Gastrocnemius medialis (tissue), 4 donors: ENCODE measurements at regions of chr6 and their contacts with region 1.

Region 1: DNA sequence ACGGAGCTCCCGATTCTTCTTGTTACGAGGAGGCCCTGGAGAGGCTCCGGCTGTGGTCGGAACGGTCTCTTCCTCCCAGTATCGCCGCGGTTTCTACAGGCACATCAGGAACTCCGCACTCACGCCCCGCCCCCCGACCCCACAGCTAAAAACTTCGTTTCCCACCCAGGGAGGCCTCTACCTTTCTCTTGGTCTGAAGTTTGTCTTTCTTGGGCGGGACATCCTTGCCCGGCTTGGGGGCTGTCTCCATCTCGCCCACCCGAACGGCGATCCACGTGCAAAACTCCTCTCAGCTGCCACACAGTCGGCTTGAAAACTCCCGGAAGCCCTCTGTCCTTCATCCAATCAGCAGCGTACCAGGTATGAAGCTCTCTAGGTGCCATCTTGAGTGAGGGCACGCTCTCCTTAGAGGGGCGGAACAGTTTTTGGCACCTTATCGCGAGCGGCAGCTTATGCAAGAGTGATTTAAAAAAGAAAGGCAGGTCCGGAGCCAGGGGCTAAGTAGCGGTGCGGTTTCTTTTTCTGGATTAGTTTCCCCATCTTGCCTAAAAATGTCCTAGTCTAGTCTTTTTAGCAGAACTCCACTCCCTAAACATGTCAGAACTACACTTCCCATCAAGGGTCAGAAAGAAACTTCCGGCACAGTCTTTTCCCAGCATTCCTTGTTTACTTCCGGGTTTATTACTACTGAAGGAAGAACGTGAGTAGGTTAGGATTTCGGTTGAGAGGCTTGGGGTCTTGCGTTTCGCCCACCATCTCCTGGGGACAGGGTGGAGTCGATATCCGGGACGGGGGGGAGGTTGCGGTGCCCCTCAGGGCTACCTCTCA is at the starts of genes PFDN6 and WDR46:
- DNase-seq: peak; percentile 77 to 83
- ATAC-seq: peak; percentile 98 to 99
- H3K4me3 ChIP-seq: peak within 1 kb of the TSS; percentile 62 to 89 (median 66)
- H3K27ac ChIP-seq: peak within 1 kb of the TSS; percentile 84 to 92 (median 86)
- H3K4me1 ChIP-seq: peaks cover 18% of the 10 kb centered on the region in 2 donors
- H3K27me3 ChIP-seq: no peaks in the 10 kb centered on the region
- CTCF ChIP-seq: no peak
- POLR2A ChIP-seq: peak; percentile 41 to 64
- total RNA-seq, gene PFDN6: 49.9 to 106 (median 76.8) TPM
- total RNA-seq, gene WDR46: 34.5 to 57.3 (median 49.1) TPM

Region 2: DNA sequence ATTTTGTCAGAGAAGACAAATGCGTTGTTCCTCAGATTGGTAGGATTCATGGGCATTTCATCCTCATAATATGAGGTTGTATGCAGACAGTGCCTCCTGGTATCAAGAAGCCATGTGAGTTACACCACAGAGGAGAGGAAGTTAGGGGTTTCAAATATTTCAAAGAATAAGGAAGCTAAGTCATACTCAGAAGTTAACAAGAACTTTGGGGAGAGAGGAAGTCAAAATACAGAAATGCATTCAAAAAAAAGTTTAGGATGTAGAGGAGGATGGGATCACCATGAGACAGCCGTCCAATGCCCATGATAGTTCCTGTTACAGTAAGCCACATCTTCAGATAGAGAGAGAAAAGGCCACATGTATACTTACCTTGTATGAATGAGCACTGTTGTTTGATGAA is 494.6 kb before region 1 on chr6:
- in situ Hi-C with region 1: no loop called
- intact Hi-C with region 1: no loop called
- DNase-seq: no peak
- ATAC-seq: no peak
- H3K4me3 ChIP-seq: no peak overlapping the region
- H3K27ac ChIP-seq: no peak overlapping the region
- H3K4me1 ChIP-seq: no peaks in the 10 kb centered on the region
- H3K27me3 ChIP-seq: peaks cover 0 to 9% (median 6%) of the 10 kb centered on the region in 3 donors
- CTCF ChIP-seq: no peak
- POLR2A ChIP-seq: no peak

Region 3: DNA sequence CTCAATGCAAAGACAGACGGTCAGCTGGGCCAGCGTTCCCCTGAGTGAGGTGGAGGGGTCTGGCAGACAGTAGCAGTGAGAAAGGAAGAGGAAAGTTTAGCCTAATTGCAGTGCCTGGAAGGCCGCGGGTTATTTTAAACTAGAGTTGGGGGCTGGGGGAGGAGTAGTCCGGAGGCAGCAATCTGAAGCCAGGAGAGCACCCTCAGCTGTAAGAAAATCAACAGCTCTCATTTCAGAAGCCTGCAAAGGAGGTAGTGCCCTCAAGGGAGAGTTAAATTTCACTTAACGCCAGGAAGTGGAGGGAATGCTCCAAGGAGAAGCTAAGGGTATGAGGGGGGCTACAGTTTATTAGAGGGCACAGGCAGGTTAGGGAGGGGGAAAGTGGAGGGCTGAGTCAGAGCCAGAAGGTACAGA is 53.9 kb before region 1 on chr6:
- in situ Hi-C with region 1: no loop called
- intact Hi-C with region 1: no loop called
- DNase-seq: no peak
- ATAC-seq: no peak
- H3K4me3 ChIP-seq: no peak overlapping the region
- H3K27ac ChIP-seq: no peak overlapping the region
- H3K4me1 ChIP-seq: no peaks in the 10 kb centered on the region
- H3K27me3 ChIP-seq: peaks cover 0 to 5% (median 5%) of the 10 kb centered on the region in 3 donors
- CTCF ChIP-seq: no peak
- POLR2A ChIP-seq: no peak

Region 4: DNA sequence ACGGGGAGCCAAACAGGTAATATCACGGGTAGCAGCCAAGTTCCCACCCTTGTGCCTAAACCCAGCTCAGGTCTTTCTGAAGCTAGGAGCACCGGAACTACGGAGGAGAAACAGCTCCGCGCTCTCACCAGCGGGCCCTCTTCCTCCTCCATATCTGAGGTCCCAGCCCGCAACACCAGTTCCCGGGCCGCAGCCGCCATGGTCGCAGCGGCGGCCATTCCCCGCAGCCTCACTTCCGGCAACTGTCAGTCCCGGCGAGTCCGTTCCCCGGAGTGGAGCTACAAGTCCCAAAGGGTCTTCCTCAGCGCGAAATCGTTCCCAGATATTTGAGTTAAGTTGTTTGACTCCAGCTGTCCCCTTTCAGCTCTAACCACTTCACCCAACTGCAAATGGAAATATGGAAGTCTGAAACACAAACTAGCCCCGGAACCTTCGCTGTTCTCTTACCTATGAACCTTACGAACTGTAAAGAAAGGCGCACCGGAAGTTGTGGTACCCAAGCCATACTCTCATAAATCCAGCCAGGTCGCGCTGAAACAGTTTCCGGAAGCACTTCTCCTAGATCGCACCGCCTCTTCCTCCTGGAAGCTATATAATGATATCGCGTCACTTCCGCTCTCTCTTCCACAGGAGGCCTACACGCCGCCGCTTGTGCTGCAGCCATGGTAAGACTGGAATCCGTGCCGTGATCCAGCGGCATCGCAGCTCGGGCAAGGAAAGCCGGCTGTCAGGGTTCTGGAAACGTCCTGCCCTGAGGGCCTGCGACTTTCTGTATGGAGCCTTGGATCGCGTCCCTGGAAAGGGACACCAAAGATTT is 17.5 kb before region 1 on chr6 and contains the starts of genes RPS18 and VPS52:
- in situ Hi-C with region 1: no loop called
- intact Hi-C with region 1: loop called (anchors 1 kb)
- DNase-seq: peak; percentile 95 to 96
- ATAC-seq: peak; percentile 98 to 99
- H3K4me3 ChIP-seq: peak within 1 kb of the TSS; percentile 67 to 95 (median 80)
- H3K27ac ChIP-seq: peak within 1 kb of the TSS; percentile 85 to 96 (median 90)
- H3K4me1 ChIP-seq: peaks cover 46 to 53% of the 10 kb centered on the region in 2 donors
- H3K27me3 ChIP-seq: no peaks in the 10 kb centered on the region
- CTCF ChIP-seq: no peak
- POLR2A ChIP-seq: peak; percentile 92 to 95
- total RNA-seq, gene RPS18: 1,834 to 2,142 (median 2,010) TPM
- total RNA-seq, gene VPS52: 28.7 to 52.8 (median 41.2) TPM

Region 5: GRCh38 chr6:33299237-33299944 is 10.3 kb after region 1 on chr6:
- in situ Hi-C with region 1: no loop called
- intact Hi-C with region 1: loop called (anchors 1 kb)
- DNase-seq: peak; percentile 84 to 89
- ATAC-seq: peak; percentile 90 to 93
- H3K4me3 ChIP-seq: peak overlapping the region; percentile 71 to 86 (median 80)
- H3K27ac ChIP-seq: peak overlapping the region; percentile 96 to 99 (median 97)
- H3K4me1 ChIP-seq: peaks cover 11 to 23% of the 10 kb centered on the region in 2 donors
- H3K27me3 ChIP-seq: no peaks in the 10 kb centered on the region
- CTCF ChIP-seq: peak; percentile 55 to 85 (median 80)
- POLR2A ChIP-seq: peak; percentile 78 to 86

Region 6: DNA sequence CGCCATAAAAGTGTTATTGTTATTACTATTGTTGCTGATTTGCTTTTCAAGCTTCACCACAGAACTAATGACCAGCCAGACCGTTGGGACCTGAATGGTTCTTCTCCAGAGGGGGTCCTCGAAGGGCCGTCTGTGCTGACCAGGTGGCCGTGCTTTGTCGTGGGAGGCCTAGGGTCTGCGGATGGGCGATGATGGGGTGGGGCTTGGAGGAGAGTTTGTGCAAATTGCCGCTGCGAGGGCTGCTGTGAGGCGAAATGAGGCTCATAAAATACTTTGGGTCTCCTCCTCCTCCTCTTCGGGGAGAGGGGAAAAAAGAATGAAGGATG is 34.5 kb after region 1 on chr6:
- in situ Hi-C with region 1: no loop called
- intact Hi-C with region 1: loop called (anchors 1 kb)
- DNase-seq: no peak
- ATAC-seq: peak in 1 of 2 donors; percentile 1
- H3K4me3 ChIP-seq: peak overlapping the region; percentile 61 to 88 (median 78)
- H3K27ac ChIP-seq: peak overlapping the region; percentile 84 to 95 (median 90)
- H3K4me1 ChIP-seq: peaks cover 30 to 39% of the 10 kb centered on the region in 2 donors
- H3K27me3 ChIP-seq: no peaks in the 10 kb centered on the region
- CTCF ChIP-seq: no peak
- POLR2A ChIP-seq: no peak

Region 7: GRCh38 chr6:33410050-33410710 is 121.0 kb after region 1 on chr6:
- in situ Hi-C with region 1: no loop called
- intact Hi-C with region 1: loop called (anchors 1 kb)
- DNase-seq: peak; percentile 96 to 97
- ATAC-seq: peak; percentile 87 to 88
- H3K4me3 ChIP-seq: peak overlapping the region; percentile 70 to 100 (median 98)
- H3K27ac ChIP-seq: peak overlapping the region; percentile 99 to 100 (median 99)
- H3K4me1 ChIP-seq: peaks cover 9 to 18% of the 10 kb centered on the region in 2 donors
- H3K27me3 ChIP-seq: no peaks in the 10 kb centered on the region
- CTCF ChIP-seq: no peak
- POLR2A ChIP-seq: peak; percentile 54 to 73

Region 8: DNA sequence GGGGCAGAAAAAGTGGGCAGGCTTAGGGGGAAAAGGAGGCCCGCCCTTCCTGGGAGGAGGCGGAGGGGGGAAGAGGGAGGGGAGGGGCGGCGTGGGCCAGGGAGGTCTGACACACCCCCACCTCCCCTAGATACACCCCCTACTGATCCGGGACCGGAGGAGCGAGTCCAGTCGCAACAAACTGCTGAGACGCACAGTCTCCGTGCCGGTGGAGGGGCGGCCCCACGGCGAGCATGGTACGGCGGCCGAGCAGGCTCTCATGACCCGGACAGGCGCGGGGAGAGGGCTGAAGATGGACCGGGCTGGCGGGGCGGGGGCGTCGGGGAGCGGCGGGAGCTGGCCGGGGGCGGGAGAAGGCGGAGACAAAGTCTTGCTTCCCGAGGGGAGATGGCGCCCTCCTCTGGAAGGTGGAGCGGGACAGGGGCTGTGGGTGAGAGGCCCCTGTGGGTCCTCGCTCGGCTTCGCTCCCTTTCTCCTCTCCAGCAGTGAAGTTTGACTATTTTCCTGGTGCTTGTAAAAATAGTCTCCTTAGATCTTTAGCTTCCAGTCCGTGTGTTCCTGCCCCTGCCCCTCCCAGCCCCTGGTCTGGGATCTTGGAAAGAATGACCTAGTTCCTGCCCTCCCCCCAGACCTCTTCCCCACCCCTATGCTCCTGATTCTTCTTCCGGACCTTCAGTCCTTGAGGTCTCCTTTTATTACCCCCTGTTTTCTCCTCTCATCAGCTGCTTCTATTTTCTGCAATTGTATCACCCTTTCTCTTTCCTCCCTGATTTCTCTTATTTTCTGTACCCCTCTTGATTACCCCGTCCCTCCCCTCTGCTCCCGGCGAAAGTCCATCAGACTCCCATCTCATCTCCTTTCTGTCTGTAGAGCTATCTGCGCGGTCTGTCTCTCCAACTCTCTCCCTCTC is 136.8 kb after region 1 on chr6:
- in situ Hi-C with region 1: no loop called
- intact Hi-C with region 1: loop called (anchors 5 kb)
- DNase-seq: peak; percentile 65 to 71
- ATAC-seq: peak; percentile 59 to 69
- H3K4me3 ChIP-seq: peak overlapping the region; percentile 62 to 79 (median 72)
- H3K27ac ChIP-seq: peak overlapping the region; percentile 83 to 91 (median 90)
- H3K4me1 ChIP-seq: peaks cover 19 to 29% of the 10 kb centered on the region in 2 donors
- H3K27me3 ChIP-seq: no peaks in the 10 kb centered on the region
- CTCF ChIP-seq: peak; percentile 21 to 72 (median 47)
- POLR2A ChIP-seq: peak in 1 of 2 donors; percentile 25